ENCODE measurements at regions of chr4 and their contacts with region 1.

Region 1: GRCh38 chr4:173319696-173320095 is 14.5 kb downstream of the HMGB2 start:
- DNase-seq: no peak
- ATAC-seq: peak in 1 of 4 donors; percentile 29
- H3K4me3 ChIP-seq: no peak overlapping the region
- H3K27ac ChIP-seq: no peak overlapping the region
- H3K4me1 ChIP-seq: peaks cover 0 to 5% (median 0%) of the 10 kb centered on the region in 4 donors
- H3K27me3 ChIP-seq: no peaks in the 10 kb centered on the region
- CTCF ChIP-seq: no peak
- POLR2A ChIP-seq: no peak

Region 2: DNA sequence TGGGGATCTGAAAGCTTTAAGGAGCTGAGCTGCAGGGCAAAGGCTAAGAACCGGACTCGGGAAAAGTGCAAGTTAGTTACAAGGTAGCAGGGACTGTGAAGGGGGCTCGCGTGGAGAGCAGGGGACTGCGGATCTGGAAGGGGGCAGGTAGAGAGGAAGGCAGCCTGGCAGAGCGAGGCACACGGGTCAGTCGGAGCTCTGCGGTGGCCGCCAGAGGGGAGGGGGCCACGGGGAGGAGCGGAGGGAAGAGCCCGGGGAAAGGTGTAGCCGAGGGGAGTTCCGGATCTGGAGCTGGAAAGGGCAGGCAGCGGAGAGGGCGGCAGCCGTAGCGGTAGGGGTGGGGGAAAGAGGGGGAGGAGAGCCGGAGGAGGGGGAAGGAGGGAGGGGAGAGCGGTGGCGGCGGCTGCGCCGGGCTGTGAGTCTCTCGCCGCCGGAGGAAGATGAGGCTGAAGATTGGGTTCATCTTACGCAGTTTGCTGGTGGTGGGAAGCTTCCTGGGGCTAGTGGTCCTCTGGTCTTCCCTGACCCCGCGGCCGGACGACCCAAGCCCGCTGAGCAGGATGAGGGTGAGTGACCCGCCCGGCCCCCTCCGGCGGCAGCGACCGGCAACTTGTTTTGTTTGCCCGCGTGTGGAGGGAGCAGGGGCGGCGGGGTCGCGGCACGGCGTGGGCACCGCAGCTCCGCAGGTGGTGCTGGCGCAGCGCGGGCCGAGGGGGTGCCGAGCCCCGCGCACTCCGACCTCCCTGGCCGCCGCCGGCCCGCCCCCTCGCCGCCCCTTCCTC is 151.1 kb before region 1 on chr4 and contains the start of gene GALNT7:
- intact Hi-C with region 1: no loop called
- DNase-seq: peak; percentile 61 to 73 (median 63)
- ATAC-seq: peak; percentile 60 to 69 (median 65)
- H3K4me3 ChIP-seq: peak within 1 kb of the TSS; percentile 58 to 65 (median 62)
- H3K27ac ChIP-seq: peak within 1 kb of the TSS; percentile 66 to 85 (median 79)
- H3K4me1 ChIP-seq: peaks cover 0 to 14% (median 0%) of the 10 kb centered on the region in 4 donors
- H3K27me3 ChIP-seq: no peaks in the 10 kb centered on the region
- CTCF ChIP-seq: no peak
- POLR2A ChIP-seq: no peak
- total RNA-seq, gene GALNT7: 0.62 to 2.2 (median 1.4) TPM

Region 3: GRCh38 chr4:173415885-173416653 is 96.4 kb after region 1 on chr4:
- intact Hi-C with region 1: loop called (anchors 5 to 10 kb)
- DNase-seq: peak; percentile 40 to 57 (median 57)
- ATAC-seq: peak; percentile 36 to 50 (median 44)
- H3K4me3 ChIP-seq: no peak overlapping the region
- H3K27ac ChIP-seq: peak overlapping the region in 1 of 3 donors; percentile 6
- H3K4me1 ChIP-seq: peaks cover 0 to 6% (median 1%) of the 10 kb centered on the region in 4 donors
- H3K27me3 ChIP-seq: no peaks in the 10 kb centered on the region
- CTCF ChIP-seq: peak in 1 of 4 donors; percentile 9
- POLR2A ChIP-seq: peak; percentile 31